ENCODE measurements at regions of chr3 and their contacts with region 1.

Region 1: GRCh38 chr3:141644931-141645330 is 93.2 kb upstream of the RNF7 start:
- DNase-seq: peak; percentile 63 to 97
- H3K4me3 ChIP-seq: no peak overlapping the region
- H3K27ac ChIP-seq: no peak overlapping the region
- H3K4me1 ChIP-seq: no peaks in the 10 kb centered on the region; a peak in 1 of 7 replicates
- H3K27me3 ChIP-seq: no peaks in the 10 kb centered on the region
- CTCF ChIP-seq: peak; percentile 72 to 93 (median 72)
- EP300 ChIP-seq: no peak
- POLR2A ChIP-seq: no peak
- RAD21 ChIP-seq: peak; percentile 71 to 74

Region 2: GRCh38 chr3:141575879-141576743 is 68.8 kb before region 1 on chr3:
- CTCF ChIA-PET with region 1: interaction called, 14 read pairs
- POLR2A ChIA-PET with region 1: no interaction called
- DNase-seq: no peak
- H3K4me3 ChIP-seq: no peak overlapping the region
- H3K27ac ChIP-seq: no peak overlapping the region
- H3K4me1 ChIP-seq: no peaks in the 10 kb centered on the region
- H3K27me3 ChIP-seq: no peaks in the 10 kb centered on the region
- CTCF ChIP-seq: peak in 1 of 3 experiments; percentile 30; a peak in 2 of 4 replicates
- EP300 ChIP-seq: no peak
- POLR2A ChIP-seq: no peak
- RAD21 ChIP-seq: peak in 1 of 2 experiments; percentile 40; a peak in 1 of 4 replicates

Region 3: DNA sequence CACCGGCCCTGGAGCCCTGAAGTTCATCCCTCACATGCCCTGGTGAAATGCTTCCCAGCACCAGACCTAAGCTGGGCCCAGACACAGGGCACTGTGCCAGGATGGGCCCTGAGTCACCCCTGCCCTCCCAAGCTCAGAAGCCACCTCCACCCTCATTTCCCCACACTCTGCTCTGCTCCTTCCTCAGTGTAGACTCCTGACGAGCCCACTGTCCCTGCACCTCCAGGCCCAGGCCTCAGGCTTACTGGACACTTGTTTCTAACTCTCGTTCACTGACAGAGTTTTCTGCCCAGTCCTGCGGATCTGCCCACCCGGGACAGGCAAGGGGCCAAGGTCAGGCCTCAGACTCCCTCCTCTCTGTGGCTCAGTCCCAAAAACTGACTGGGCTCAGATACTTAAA is 19.4 kb before region 1 on chr3:
- CTCF ChIA-PET with region 1: interaction called, 27 read pairs
- POLR2A ChIA-PET with region 1: no interaction called
- DNase-seq: no peak
- H3K4me3 ChIP-seq: no peak overlapping the region
- H3K27ac ChIP-seq: no peak overlapping the region
- H3K4me1 ChIP-seq: peaks cover 0 to 5% (median 1%) of the 10 kb centered on the region in 4 experiments; a peak in 3 of 7 replicates
- H3K27me3 ChIP-seq: no peaks in the 10 kb centered on the region
- CTCF ChIP-seq: no peak
- EP300 ChIP-seq: no peak
- POLR2A ChIP-seq: no peak
- RAD21 ChIP-seq: no peak

Region 4: GRCh38 chr3:141659821-141660613 is 15.1 kb after region 1 on chr3:
- CTCF ChIA-PET with region 1: interaction called, 29 read pairs
- POLR2A ChIA-PET with region 1: interaction called, 3 read pairs
- DNase-seq: peak in 1 of 2 experiments; percentile 69
- H3K4me3 ChIP-seq: peak overlapping the region; percentile 68 to 82 (median 72)
- H3K27ac ChIP-seq: no peak overlapping the region
- H3K4me1 ChIP-seq: peaks cover 0 to 10% (median 3%) of the 10 kb centered on the region in 4 experiments; a peak in 4 of 7 replicates
- H3K27me3 ChIP-seq: peaks cover 1 to 34% (median 25%) of the 10 kb centered on the region in 4 experiments
- CTCF ChIP-seq: no peak
- EP300 ChIP-seq: no peak
- POLR2A ChIP-seq: no peak
- RAD21 ChIP-seq: no peak

Region 5: GRCh38 chr3:141699897-141700296 is 55.0 kb after region 1 on chr3:
- CTCF ChIA-PET with region 1: interaction called, 14 read pairs
- POLR2A ChIA-PET with region 1: no interaction called
- DNase-seq: no peak
- H3K4me3 ChIP-seq: no peak overlapping the region
- H3K27ac ChIP-seq: no peak overlapping the region
- H3K4me1 ChIP-seq: peaks cover 0 to 7% (median 2%) of the 10 kb centered on the region in 4 experiments; a peak in 1 of 7 replicates
- H3K27me3 ChIP-seq: no peaks in the 10 kb centered on the region
- CTCF ChIP-seq: no peak
- EP300 ChIP-seq: no peak
- POLR2A ChIP-seq: no peak
- RAD21 ChIP-seq: no peak

Region 6: GRCh38 chr3:141804787-141805639 is 160.1 kb after region 1 on chr3:
- CTCF ChIA-PET with region 1: no interaction called
- POLR2A ChIA-PET with region 1: no interaction called
- DNase-seq: no peak
- H3K4me3 ChIP-seq: no peak overlapping the region
- H3K27ac ChIP-seq: no peak overlapping the region
- H3K4me1 ChIP-seq: peaks cover 0 to 2% (median 1%) of the 10 kb centered on the region in 4 experiments; a peak in 1 of 7 replicates
- H3K27me3 ChIP-seq: no peaks in the 10 kb centered on the region
- CTCF ChIP-seq: no peak
- EP300 ChIP-seq: no peak
- POLR2A ChIP-seq: no peak
- RAD21 ChIP-seq: no peak

Measured in H1 (cell line).